GM12878 (cell line): ENCODE measurements at regions of chr11 and their contacts with region 1.

Region 1: GRCh38 chr11:125062931-125063428 is at the start of gene SLC37A2:
- DNase-seq: peak; percentile 62
- ATAC-seq: peak; percentile 94
- H3K4me3 ChIP-seq: peak within 1 kb of the TSS; percentile 77
- H3K27ac ChIP-seq: no peak within 1 kb of the TSS
- H3K4me1 ChIP-seq: peaks cover 4% of the 10 kb centered on the region; the same call in 1 of the 2 replicates
- H3K27me3 ChIP-seq: no peaks in the 10 kb centered on the region; a peak in 1 of 4 replicates
- CTCF ChIP-seq: peak in 2 of 3 experiments; percentile 18 to 39; a peak in 3 of 6 replicates
- EP300 ChIP-seq: peak in 1 of 2 experiments; percentile 64; a peak in 1 of 4 replicates
- POLR2A ChIP-seq: peak; percentile 94
- RAD21 ChIP-seq: no peak
- polyA plus RNA-seq, gene SLC37A2: 0.26 to 0.29 TPM

Region 2: DNA sequence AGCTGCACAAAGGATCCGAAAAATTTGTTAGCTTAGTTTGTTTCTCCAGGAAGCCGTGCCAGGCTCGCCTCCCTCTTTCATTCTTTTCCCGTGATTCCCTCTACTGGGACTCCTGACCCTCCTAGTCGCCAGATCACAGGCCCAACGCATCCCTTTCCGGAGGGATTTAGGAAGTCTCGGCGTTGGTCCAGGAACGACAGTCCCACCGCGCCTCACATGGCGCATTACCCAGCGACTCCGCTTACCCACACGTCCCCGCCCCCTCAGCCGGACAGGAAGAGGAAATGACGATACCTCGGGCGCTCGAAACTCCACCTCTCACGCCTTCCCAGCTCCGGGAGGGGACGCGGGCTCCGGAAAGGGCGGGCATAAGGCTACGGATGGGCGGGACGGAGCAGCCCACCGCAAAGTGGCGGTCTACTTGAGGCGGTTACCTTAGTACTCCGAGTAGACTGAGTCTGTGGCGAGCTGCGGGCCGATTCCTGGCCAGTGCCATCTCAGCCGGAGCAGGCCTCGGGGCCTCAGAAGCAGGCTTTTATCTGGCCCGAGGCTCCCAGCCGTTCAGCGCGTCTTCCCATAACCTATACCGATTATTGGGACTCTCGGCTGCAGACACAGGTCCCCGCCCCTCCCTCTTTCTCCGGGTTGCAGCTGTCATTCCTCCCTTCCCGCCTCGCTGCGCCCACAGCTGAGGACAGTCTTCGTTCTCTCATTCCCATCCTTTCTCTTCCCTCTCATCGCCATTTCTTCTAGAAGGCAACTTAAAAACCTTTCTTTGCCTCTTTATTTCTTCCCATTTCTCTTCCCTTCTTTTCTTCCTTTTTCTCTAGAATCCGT is 109.0 kb before region 1 on chr11 and contains the start of gene CCDC15:
- CTCF ChIA-PET with region 1: no interaction called
- POLR2A ChIA-PET with region 1: interaction called, 6 read pairs
- RAD21 ChIA-PET with region 1: no interaction called
- SMC1A ChIA-PET with region 1: interaction called, 9 read pairs
- in situ Hi-C with region 1: no loop called
- intact Hi-C with region 1: loop called (anchors 2 kb)
- DNase-seq: peak; percentile 87
- ATAC-seq: peak; percentile 99
- H3K4me3 ChIP-seq: peak within 1 kb of the TSS; percentile 79
- H3K27ac ChIP-seq: peak within 1 kb of the TSS; percentile 54
- H3K4me1 ChIP-seq: no peaks in the 10 kb centered on the region; the same call in 1 of the 2 replicates
- H3K27me3 ChIP-seq: no peaks in the 10 kb centered on the region
- CTCF ChIP-seq: no peak
- EP300 ChIP-seq: 0 out of 4 replicates have a peak, but pooled peaks of 1 of the 2 experiments have one; percentile 18
- POLR2A ChIP-seq: peak; percentile 99
- RAD21 ChIP-seq: no peak
- polyA plus RNA-seq, gene CCDC15: 2.0 to 2.8 TPM

Region 3: DNA sequence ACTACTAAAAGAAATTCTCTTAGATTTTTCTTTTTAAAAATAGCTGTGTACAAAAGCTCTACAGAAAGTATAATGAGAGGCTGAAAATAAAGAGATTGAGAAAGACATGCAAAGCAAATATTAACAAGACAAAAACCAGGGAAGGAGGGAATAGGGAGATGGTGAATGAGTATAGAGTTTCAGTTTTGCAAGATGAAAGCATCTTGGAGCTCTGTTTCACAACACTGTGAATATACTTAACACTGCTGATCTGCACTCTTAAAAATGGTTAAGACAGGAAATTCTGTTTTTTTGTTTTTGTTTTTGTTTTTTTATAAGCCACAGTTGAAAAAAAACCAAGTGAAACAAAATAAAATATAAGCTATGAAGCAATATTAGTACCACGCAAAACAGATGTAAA is 42.9 kb after region 1 on chr11:
- CTCF ChIA-PET with region 1: interaction called, 46 read pairs
- POLR2A ChIA-PET with region 1: interaction called, 14 read pairs
- RAD21 ChIA-PET with region 1: interaction called, 9 read pairs
- SMC1A ChIA-PET with region 1: interaction called, 31 read pairs
- in situ Hi-C with region 1: no loop called
- intact Hi-C with region 1: no loop called
- DNase-seq: no peak
- ATAC-seq: peak; percentile 34; the same call in 1 of the 3 replicates
- H3K4me3 ChIP-seq: no peak overlapping the region
- H3K27ac ChIP-seq: no peak overlapping the region
- H3K4me1 ChIP-seq: peaks cover 3% of the 10 kb centered on the region; the same call in 1 of the 2 replicates
- H3K27me3 ChIP-seq: no peaks in the 10 kb centered on the region
- CTCF ChIP-seq: no peak
- EP300 ChIP-seq: no peak
- POLR2A ChIP-seq: no peak
- RAD21 ChIP-seq: no peak

Region 4: DNA sequence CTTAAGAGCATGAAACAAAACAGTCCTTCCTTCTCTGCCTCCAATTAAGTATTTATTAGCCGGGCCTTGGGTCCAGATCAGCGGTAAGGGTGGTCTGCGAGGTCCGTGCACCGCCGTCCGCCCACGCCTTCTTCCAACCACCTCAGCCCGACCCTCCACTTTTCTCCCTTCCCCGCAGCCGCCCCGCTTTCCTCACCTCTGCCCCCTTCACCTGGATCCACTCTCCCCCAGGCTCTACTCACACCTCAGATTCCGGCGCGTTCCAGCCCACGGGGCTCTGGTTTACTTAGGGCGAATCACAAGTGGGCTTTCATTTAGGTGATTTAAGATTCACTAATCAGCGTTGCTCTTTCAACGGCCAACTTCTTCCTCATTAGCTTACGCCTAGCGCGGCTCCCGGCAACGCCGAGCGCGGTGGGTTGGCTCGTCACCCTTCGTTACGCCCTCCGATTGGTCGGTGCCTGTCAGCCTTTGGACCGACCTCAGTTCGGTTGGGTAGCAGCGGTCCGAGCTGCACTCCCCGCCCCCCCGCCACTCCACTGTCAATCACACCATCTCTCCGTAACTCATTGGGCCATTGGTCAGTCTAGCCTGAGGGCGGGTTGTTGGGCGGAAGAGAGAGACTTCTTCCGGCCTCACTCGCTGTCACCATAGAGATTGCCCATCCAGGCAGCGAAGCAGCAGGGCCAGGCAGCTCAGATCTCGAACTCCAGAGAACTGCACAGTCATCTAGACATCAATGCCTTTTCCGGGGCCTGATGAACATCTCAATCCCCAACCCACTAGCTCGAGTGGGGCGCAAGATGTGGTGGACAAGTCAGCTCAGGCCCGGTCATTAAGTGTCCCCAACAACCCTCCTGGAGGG is 48.6 kb after region 1 on chr11 and contains the start of gene TMEM218:
- CTCF ChIA-PET with region 1: interaction called, 46 read pairs
- POLR2A ChIA-PET with region 1: interaction called, 14 read pairs
- RAD21 ChIA-PET with region 1: interaction called, 9 read pairs
- SMC1A ChIA-PET with region 1: interaction called, 31 read pairs
- in situ Hi-C with region 1: no loop called
- intact Hi-C with region 1: no loop called
- DNase-seq: peak; percentile 100
- ATAC-seq: peak; percentile 99
- H3K4me3 ChIP-seq: peak within 1 kb of the TSS; percentile 96
- H3K27ac ChIP-seq: peak within 1 kb of the TSS; percentile 49
- H3K4me1 ChIP-seq: no peaks in the 10 kb centered on the region; the same call in 1 of the 2 replicates
- H3K27me3 ChIP-seq: no peaks in the 10 kb centered on the region
- CTCF ChIP-seq: no peak
- EP300 ChIP-seq: no peak
- POLR2A ChIP-seq: peak; percentile 76
- RAD21 ChIP-seq: no peak
- polyA plus RNA-seq, gene TMEM218: 11.2 to 15.5 TPM